Heart left ventricle (tissue), 16 donors: ENCODE measurements at regions of chr16 and their contacts with region 1.

Region 1: DNA sequence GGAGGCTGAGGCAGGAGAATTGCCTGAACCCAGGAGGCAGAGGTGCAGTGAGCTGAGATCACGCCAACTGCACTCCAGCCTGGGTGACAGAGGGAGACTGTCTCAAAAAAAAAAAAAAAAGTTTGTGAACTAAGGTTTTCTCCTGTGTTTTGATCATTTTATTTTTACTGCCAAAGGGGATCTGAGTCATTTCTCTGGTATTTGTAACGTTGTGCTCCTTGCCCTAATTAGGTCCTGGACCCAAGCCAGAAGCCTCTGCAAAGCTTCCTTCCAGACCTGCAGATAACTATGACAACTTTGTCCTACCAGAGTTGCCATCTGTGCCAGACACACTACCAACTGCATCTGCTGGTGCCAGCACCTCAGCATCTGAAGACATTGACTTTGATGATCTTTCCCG is 32.1 kb downstream of the IST1 start:
- DNase-seq: peak in 4 of 5 donors; percentile 60 to 85 (median 72)
- ATAC-seq: peak; percentile 51 to 77 (median 63)
- H3K4me3 ChIP-seq: no peak overlapping the region
- H3K27ac ChIP-seq: peak overlapping the region; percentile 27 to 83 (median 69)
- H3K4me1 ChIP-seq: peaks cover 19 to 71% (median 61%) of the 10 kb centered on the region in 12 donors
- H3K27me3 ChIP-seq: no peaks in the 10 kb centered on the region
- CTCF ChIP-seq: no peak
- POLR2A ChIP-seq: no peak

Region 2: GRCh38 chr16:71945616-71946015 is 18.2 kb after region 1 on chr16:
- intact Hi-C with region 1: loop called in 1 of 10 experiments (anchors 2 kb)
- DNase-seq: no peak
- ATAC-seq: no peak
- H3K4me3 ChIP-seq: no peak overlapping the region
- H3K27ac ChIP-seq: no peak overlapping the region
- H3K4me1 ChIP-seq: peaks cover 0 to 5% (median 0%) of the 10 kb centered on the region in 12 donors
- H3K27me3 ChIP-seq: no peaks in the 10 kb centered on the region
- CTCF ChIP-seq: no peak
- POLR2A ChIP-seq: no peak

Region 3: DNA sequence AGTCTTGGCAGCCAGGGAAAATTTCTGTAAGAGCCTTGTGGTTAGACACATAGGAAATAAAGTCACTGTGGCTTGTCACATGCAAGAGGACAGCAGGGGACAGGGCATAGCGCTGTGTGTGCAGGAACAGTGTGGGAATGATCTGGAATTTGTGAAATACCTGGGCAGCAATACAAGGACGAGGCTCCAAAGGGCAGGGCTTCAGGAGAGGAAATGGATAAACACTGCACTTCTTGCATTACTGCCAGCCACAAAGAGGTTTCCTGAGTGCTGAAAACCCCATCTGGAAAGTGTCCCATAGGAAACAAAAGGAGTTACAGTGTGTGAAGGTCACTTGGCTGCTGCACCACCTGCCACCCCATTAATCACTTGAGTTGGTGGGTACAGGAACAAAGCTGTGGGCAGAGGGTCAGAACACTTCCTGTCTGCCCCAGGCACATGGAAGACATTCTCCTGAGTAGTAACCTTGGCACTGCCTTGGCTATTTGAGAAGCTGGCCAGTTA is 114.8 kb after region 1 on chr16:
- intact Hi-C with region 1: no loop called
- DNase-seq: no peak
- ATAC-seq: peak in 3 of 4 donors; percentile 45 to 75 (median 65)
- H3K4me3 ChIP-seq: no peak overlapping the region
- H3K27ac ChIP-seq: no peak overlapping the region
- H3K4me1 ChIP-seq: peaks cover 0 to 7% (median 0%) of the 10 kb centered on the region in 12 donors
- H3K27me3 ChIP-seq: no peaks in the 10 kb centered on the region
- CTCF ChIP-seq: no peak
- POLR2A ChIP-seq: no peak